ENCODE measurements at regions of chr5 and their contacts with region 1.

Region 1: GRCh38 chr5:150661086-150661485 is at the start of gene MYOZ3:
- DNase-seq: no peak
- ATAC-seq: no peak
- H3K4me3 Mint-ChIP-seq: no peak within 1 kb of the TSS
- H3K27ac Mint-ChIP-seq: peak within 1 kb of the TSS in 2 of 10 donors; percentile 60 to 61
- H3K4me1 Mint-ChIP-seq: peaks cover under 1 to 9% (median 7%) of the 10 kb centered on the region in 4 donors
- H3K27me3 Mint-ChIP-seq: peaks cover 3 to 11% (median 8%) of the 10 kb centered on the region in 5 donors
- polyA plus RNA-seq, gene MYOZ3: 0.05 to 0.19 TPM in 2 of 3 donors, not detected in the other

Region 2: DNA sequence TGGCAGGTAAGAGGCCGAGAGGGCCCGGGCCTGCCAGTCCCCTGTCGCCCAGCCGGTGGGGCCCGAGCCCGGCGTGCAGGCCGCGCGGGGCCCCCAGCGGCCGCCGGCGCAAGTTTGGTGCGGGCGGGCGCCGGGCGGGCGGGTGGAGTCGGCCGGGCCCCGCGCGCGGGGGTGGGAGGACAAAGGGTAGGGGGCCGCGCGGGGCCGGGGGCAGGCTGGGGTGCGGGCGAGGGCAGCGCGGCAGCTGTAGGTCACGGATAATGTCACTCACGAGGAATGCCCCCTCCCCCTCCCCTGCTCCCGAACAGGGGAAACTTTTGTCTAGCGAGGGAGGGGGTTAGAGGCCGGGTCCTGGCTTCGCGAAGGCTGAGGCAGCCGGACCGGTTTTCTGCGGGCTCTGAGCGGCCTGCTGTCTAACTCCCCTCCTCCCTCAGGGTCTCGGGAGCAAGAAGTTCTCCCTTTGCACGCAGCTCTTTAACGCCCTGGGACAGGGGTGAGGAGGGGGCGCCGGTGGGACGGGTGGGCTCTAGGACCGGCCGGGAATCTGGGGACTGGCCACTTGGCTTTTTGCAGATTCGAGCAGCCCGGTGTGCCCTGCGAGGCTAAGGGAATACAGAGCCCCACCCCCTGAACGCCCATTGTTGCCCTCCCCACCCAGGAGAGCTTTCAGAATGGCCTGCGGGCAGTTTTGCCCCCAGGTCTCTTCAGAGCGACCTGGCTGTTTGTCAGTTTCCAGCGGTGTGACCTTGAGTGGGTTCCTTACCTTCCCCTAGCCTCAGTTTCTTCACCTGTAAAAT is 174.5 kb before region 1 on chr5:
- POLR2A ChIA-PET with region 1: interaction called, 10 read pairs
- DNase-seq: peak; percentile 10 to 66 (median 54)
- ATAC-seq: peak; percentile 59 to 72
- H3K4me3 Mint-ChIP-seq: peak overlapping the region; percentile 49 to 88 (median 75)
- H3K27ac Mint-ChIP-seq: peak overlapping the region in 6 of 10 donors; percentile 12 to 87 (median 64)
- H3K4me1 Mint-ChIP-seq: peaks cover 5 to 39% (median 10%) of the 10 kb centered on the region in 4 donors
- H3K27me3 Mint-ChIP-seq: peaks cover 0 to 13% (median 1%) of the 10 kb centered on the region in 5 donors

Region 3: DNA sequence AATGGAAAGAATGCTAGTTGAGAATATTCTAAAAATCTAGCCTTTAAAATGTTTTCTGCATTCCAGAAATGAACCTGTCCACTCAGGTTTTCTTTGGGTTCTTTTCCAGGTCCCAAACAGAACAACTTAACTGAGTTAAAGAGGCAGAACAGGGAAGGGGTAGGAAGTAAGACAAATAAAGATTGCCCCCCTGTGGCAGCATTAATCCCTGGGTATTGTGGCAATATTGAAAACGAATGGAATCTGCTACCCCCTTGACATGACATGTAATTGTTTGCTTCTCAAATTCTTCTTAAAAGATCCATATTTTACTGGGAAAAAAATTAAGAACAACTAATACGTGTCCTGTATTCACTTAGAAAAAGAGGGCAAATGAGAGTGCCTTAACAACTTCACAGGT is 49.1 kb after region 1 on chr5:
- POLR2A ChIA-PET with region 1: no interaction called
- DNase-seq: peak in 1 of 10 donors; percentile 13
- ATAC-seq: no peak
- H3K4me3 Mint-ChIP-seq: no peak overlapping the region
- H3K27ac Mint-ChIP-seq: no peak overlapping the region
- H3K4me1 Mint-ChIP-seq: no peaks in the 10 kb centered on the region
- H3K27me3 Mint-ChIP-seq: no peaks in the 10 kb centered on the region

Measured in naive thymus-derived CD8-positive, alpha-beta T cell (primary cell).